B cell (primary cell): ENCODE measurements at regions of chr12 and their contacts with region 1.

Region 1: DNA sequence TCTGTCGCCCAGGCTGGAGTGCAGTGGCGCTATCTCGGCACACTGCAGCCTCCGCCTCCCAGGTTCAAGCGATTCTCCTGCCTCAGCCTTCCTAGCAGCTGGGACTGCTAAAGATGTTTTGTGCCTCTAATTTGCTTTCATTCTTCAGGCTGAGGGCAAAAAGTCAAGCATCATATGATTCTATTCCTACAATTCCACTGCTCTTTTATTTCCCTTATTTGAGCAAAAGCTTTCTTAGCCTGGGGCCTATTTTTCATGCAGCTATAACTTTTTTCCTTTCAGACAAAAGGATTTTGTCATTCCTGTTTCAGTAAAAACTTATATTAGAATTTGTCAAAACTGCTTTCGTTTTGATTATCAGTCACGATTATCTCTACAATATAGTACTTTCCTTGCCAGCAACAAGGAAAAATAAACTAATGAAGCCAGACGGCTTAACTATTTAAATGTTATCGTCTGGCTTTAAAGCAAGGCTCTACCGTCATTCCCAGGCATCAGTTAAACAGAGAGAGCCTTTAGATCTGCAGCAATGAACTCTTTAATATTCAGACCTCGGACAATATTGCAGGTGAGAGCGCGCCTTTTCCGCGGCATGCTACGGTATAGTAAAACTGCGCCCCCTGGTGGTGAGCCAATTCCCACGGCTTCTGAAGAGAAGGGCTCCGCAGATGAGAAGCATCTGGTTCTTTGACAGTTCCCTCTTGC is 1.4 kb upstream of the SLC2A13 start:
- DNase-seq: peak; percentile 90
- ATAC-seq: peak; percentile 42
- H3K4me3 ChIP-seq: peak overlapping the region in 4 of 5 experiments; percentile 39 to 83 (median 58)
- H3K4me3 Mint-ChIP-seq: peak overlapping the region; percentile 81
- H3K27ac ChIP-seq: peak overlapping the region in 1 of 2 donors; percentile 17
- H3K27ac Mint-ChIP-seq: peak overlapping the region; percentile 7
- H3K4me1 ChIP-seq: peaks cover 10 to 30% of the 10 kb centered on the region in 2 donors
- H3K4me1 Mint-ChIP-seq: peaks cover 29% of the 10 kb centered on the region
- H3K27me3 ChIP-seq: no peaks in the 10 kb centered on the region
- H3K27me3 Mint-ChIP-seq: no peaks in the 10 kb centered on the region
- CTCF ChIP-seq: peak; percentile 94

Region 2: GRCh38 chr12:39319187-39319586 is 788.1 kb before region 1 on chr12:
- CTCF ChIA-PET with region 1: no interaction called
- POLR2A ChIA-PET with region 1: no interaction called
- intact Hi-C with region 1: loop called (anchors 2 kb)
- DNase-seq: no peak
- ATAC-seq: no peak
- H3K4me3 ChIP-seq: no peak overlapping the region
- H3K4me3 Mint-ChIP-seq: no peak overlapping the region
- H3K27ac ChIP-seq: no peak overlapping the region
- H3K27ac Mint-ChIP-seq: no peak overlapping the region
- H3K4me1 ChIP-seq: no peaks in the 10 kb centered on the region
- H3K4me1 Mint-ChIP-seq: no peaks in the 10 kb centered on the region
- H3K27me3 ChIP-seq: no peaks in the 10 kb centered on the region
- H3K27me3 Mint-ChIP-seq: no peaks in the 10 kb centered on the region
- CTCF ChIP-seq: no peak

Region 3: GRCh38 chr12:39619660-39620433 is 487.4 kb before region 1 on chr12 and contains the start of gene ABCD2:
- CTCF ChIA-PET with region 1: interaction called, 5 read pairs
- POLR2A ChIA-PET with region 1: no interaction called
- intact Hi-C with region 1: loop called (anchors 2 kb)
- DNase-seq: peak; percentile 89
- ATAC-seq: peak; percentile 85
- H3K4me3 ChIP-seq: peak within 1 kb of the TSS; percentile 54 to 78 (median 74)
- H3K4me3 Mint-ChIP-seq: no peak within 1 kb of the TSS
- H3K27ac ChIP-seq: peak within 1 kb of the TSS; percentile 87 to 88
- H3K27ac Mint-ChIP-seq: no peak within 1 kb of the TSS
- H3K4me1 ChIP-seq: peaks cover 27 to 29% of the 10 kb centered on the region in 2 donors
- H3K4me1 Mint-ChIP-seq: peaks cover 28% of the 10 kb centered on the region
- H3K27me3 ChIP-seq: no peaks in the 10 kb centered on the region
- H3K27me3 Mint-ChIP-seq: no peaks in the 10 kb centered on the region
- CTCF ChIP-seq: no peak
- total RNA-seq, gene ABCD2: 1.5 and 1.8 TPM in 2 replicates

Region 4: DNA sequence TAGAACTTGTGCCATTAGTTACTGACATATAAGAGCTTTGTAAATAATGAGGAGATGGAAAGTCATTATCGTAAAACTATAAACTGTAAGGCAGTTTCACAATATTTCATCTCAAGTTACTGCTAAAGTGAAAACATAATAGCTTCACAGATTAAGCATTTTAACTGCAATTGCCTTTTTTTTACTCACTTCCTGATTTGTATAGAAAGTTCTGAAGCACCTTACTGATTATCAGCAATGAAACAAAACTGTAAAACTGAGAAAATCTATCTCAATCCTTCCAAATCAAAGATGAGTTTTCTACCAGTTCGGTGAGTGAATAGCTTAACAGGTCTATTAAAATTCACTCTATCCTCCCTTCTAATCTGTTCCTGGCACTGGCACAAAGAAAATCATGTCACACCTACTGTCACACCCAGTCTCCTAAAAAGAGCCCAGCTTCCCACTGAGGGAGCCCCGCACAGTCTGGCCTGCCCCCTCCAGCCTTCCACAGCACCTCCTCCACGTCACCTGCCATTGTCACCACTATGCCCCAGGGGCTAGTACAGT is 326.3 kb before region 1 on chr12:
- CTCF ChIA-PET with region 1: no interaction called
- POLR2A ChIA-PET with region 1: no interaction called
- intact Hi-C with region 1: no loop called
- DNase-seq: no peak
- ATAC-seq: no peak
- H3K4me3 ChIP-seq: no peak overlapping the region
- H3K4me3 Mint-ChIP-seq: no peak overlapping the region
- H3K27ac ChIP-seq: no peak overlapping the region
- H3K27ac Mint-ChIP-seq: no peak overlapping the region
- H3K4me1 ChIP-seq: no peaks in the 10 kb centered on the region
- H3K4me1 Mint-ChIP-seq: no peaks in the 10 kb centered on the region
- H3K27me3 ChIP-seq: no peaks in the 10 kb centered on the region
- H3K27me3 Mint-ChIP-seq: no peaks in the 10 kb centered on the region
- CTCF ChIP-seq: no peak

Region 5: GRCh38 chr12:39919790-39920189 is 187.5 kb before region 1 on chr12:
- CTCF ChIA-PET with region 1: no interaction called
- POLR2A ChIA-PET with region 1: no interaction called
- intact Hi-C with region 1: no loop called
- DNase-seq: no peak
- ATAC-seq: no peak
- H3K4me3 ChIP-seq: no peak overlapping the region
- H3K4me3 Mint-ChIP-seq: no peak overlapping the region
- H3K27ac ChIP-seq: no peak overlapping the region
- H3K27ac Mint-ChIP-seq: no peak overlapping the region
- H3K4me1 ChIP-seq: no peaks in the 10 kb centered on the region
- H3K4me1 Mint-ChIP-seq: no peaks in the 10 kb centered on the region
- H3K27me3 ChIP-seq: no peaks in the 10 kb centered on the region
- H3K27me3 Mint-ChIP-seq: no peaks in the 10 kb centered on the region
- CTCF ChIP-seq: no peak

Region 6: DNA sequence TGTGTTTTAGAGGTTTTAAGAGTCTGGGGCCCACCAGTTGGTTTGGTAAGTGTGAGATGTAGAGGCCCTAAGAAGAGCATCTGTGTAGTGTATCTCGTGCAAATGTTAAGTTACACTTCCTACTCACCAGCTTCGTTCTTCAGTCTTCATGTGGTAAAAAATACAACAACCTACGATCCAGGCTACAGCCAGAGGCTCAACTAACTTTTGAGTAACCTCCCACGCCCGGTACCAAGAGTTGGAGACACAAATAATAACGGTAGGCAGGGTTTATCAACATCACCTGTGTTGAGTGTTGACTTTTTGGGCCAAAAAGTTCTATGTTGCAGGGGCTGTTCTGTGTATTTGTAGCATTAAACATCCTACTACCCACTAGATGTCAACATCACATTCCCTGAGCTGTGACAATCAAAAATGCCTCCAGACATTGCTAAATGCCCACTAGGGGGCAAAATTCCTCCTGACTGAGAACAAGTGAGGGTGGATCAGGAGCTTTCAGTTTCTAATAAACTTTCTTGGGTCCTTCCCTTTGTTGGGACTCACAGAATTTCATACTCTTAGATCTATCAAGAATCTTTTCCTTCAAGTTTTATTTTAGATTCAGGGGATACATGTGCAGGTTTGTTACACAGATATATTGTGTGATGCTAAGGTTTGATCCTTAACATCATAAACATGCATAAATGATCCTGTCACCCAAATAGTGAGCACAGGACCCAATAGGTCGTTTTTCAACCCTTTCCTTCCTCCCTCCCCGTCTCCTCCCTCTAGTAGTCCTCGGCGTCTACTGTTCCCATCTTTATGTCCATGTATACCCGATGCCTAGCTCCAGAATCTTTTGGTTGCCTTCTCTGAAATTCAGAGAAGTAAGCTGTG is 96.1 kb before region 1 on chr12:
- CTCF ChIA-PET with region 1: interaction called, 80 read pairs
- POLR2A ChIA-PET with region 1: no interaction called
- intact Hi-C with region 1: loop called (anchors 1 kb)
- DNase-seq: peak; percentile 82
- ATAC-seq: peak; percentile 89
- H3K4me3 ChIP-seq: peak overlapping the region in 4 of 5 experiments; percentile 21 to 54 (median 40)
- H3K4me3 Mint-ChIP-seq: peak overlapping the region; percentile 80
- H3K27ac ChIP-seq: peak overlapping the region in 1 of 2 donors; percentile 35
- H3K27ac Mint-ChIP-seq: peak overlapping the region; percentile 10
- H3K4me1 ChIP-seq: peaks cover 5 to 6% of the 10 kb centered on the region in 2 donors
- H3K4me1 Mint-ChIP-seq: peaks cover 17% of the 10 kb centered on the region
- H3K27me3 ChIP-seq: no peaks in the 10 kb centered on the region
- H3K27me3 Mint-ChIP-seq: no peaks in the 10 kb centered on the region
- CTCF ChIP-seq: peak; percentile 85

Region 7: GRCh38 chr12:40168868-40169267 is 61.6 kb after region 1 on chr12:
- CTCF ChIA-PET with region 1: no interaction called
- POLR2A ChIA-PET with region 1: no interaction called
- intact Hi-C with region 1: no loop called
- DNase-seq: peak; percentile 51
- ATAC-seq: peak; percentile 67
- H3K4me3 ChIP-seq: peak overlapping the region in 3 of 5 experiments; percentile 8 to 31 (median 22)
- H3K4me3 Mint-ChIP-seq: peak overlapping the region; percentile 80
- H3K27ac ChIP-seq: no peak overlapping the region
- H3K27ac Mint-ChIP-seq: peak overlapping the region; percentile 68
- H3K4me1 ChIP-seq: peaks cover 11% of the 10 kb centered on the region in 2 donors
- H3K4me1 Mint-ChIP-seq: peaks cover 26% of the 10 kb centered on the region
- H3K27me3 ChIP-seq: no peaks in the 10 kb centered on the region
- H3K27me3 Mint-ChIP-seq: no peaks in the 10 kb centered on the region
- CTCF ChIP-seq: no peak

Region 8: GRCh38 chr12:40224439-40225291 is 117.4 kb after region 1 on chr12 and contains the start of gene LRRK2:
- CTCF ChIA-PET with region 1: interaction called, 4 read pairs
- POLR2A ChIA-PET with region 1: interaction called, 8 read pairs
- intact Hi-C with region 1: loop called (anchors 1 kb)
- DNase-seq: peak; percentile 94
- ATAC-seq: peak; percentile 81
- H3K4me3 ChIP-seq: peak within 1 kb of the TSS; percentile 63 to 99 (median 76)
- H3K4me3 Mint-ChIP-seq: peak within 1 kb of the TSS; percentile 94
- H3K27ac ChIP-seq: peak within 1 kb of the TSS; percentile 80 to 98
- H3K27ac Mint-ChIP-seq: peak within 1 kb of the TSS; percentile 97
- H3K4me1 ChIP-seq: peaks cover 36 to 46% of the 10 kb centered on the region in 2 donors
- H3K4me1 Mint-ChIP-seq: peaks cover 61% of the 10 kb centered on the region
- H3K27me3 ChIP-seq: no peaks in the 10 kb centered on the region
- H3K27me3 Mint-ChIP-seq: no peaks in the 10 kb centered on the region
- CTCF ChIP-seq: peak; percentile 9
- total RNA-seq, gene LRRK2: 56.5 and 60.2 TPM in 2 replicates